Calu3 (cell line): ENCODE measurements at regions of chr10 and their contacts with region 1.

Region 1: DNA sequence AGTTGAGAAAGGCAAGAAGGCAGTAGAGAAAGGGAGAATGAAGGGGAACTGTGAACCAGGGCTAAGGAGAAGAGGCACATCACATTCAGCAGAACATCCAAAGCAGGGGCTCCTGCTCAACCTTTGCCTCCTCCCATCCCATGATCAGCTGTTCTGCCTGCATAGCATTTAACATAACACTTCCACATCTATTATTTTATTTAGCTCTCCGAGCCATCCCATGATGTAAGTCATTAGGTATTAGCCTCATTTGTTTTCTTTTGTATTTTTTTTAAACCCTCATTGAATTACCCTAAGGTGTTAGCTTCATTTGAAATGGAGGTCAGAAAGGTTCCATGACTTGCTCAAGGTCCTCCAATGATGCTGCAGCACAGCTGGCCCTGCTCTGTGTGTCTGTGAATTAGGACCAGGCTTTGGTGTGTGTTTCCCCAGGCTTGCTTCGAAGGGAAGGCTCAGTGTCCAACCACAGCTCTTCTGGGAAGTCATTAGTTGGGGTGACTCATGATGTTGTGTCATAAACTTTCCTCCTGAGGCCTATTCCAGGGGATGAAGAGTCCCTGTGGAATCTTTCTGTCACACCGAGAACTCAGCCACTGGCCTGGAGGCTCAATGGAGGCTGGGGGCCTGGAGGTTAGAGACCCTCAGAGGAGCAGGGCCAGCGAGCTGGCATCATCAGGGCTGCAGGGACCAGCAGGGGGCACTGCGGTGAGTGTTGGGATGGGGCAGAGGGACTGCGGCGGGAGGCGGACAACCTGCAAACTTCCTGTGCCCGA is 16.5 kb downstream of the NPFFR1 start:
- DNase-seq: peak; percentile 56
- H3K4me3 Mint-ChIP-seq: no peak overlapping the region
- H3K27ac Mint-ChIP-seq: peak overlapping the region; percentile 3
- H3K4me1 Mint-ChIP-seq: peaks cover 32% of the 10 kb centered on the region
- H3K27me3 Mint-ChIP-seq: no peaks in the 10 kb centered on the region
- CTCF ChIP-seq: peak; percentile 43

Region 2: DNA sequence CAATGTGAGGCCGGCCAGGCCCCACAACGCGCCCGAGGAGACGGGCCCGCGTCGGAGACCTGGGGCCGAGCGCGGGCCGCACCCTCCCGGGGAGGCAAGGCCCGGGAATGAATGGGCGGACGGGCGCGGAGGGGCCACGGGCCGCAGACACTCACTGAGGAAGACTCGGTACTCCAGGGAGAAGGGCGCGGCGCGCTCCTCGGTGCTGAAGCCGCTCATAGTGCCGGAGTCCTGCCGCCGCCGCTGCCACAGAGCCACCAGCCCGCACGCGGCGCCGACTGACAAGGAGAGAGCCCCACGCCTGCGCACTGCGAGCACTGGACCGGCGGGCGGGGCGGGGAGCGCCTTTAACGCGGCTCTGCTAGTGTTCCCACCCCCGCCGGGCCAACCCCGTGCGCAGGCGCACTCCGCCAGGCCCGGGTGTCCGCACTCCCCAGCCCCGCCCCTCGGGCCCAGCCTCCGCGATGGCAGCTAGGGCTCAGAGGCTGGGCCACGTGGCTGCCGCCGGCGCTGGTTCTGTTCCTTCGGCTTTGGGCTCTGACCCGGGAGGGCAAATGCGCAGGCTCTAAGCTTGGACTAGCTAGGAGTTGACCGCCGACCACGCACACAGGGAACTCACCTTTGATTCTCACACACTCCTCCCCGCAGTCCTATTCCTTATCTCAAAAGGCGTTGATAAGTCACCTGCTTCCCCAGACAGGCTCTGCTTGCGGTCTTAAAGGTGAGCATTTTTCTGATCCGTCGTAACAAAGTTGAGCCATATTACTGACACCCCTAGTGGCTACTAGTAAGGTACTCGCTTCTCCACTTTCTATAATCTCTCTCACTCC is 34.0 kb before region 1 on chr10 and contains the start of gene PPA1:
- CTCF ChIA-PET with region 1: interaction called, 13 read pairs
- intact Hi-C with region 1: loop called (anchors 5 kb)
- DNase-seq: peak; percentile 100
- H3K4me3 Mint-ChIP-seq: peak within 1 kb of the TSS; percentile 75
- H3K27ac Mint-ChIP-seq: peak within 1 kb of the TSS; percentile 97
- H3K4me1 Mint-ChIP-seq: peaks cover 7% of the 10 kb centered on the region
- H3K27me3 Mint-ChIP-seq: no peaks in the 10 kb centered on the region
- CTCF ChIP-seq: no peak
- total RNA-seq, gene PPA1: 260 and 280 TPM in 2 replicates

Region 3: DNA sequence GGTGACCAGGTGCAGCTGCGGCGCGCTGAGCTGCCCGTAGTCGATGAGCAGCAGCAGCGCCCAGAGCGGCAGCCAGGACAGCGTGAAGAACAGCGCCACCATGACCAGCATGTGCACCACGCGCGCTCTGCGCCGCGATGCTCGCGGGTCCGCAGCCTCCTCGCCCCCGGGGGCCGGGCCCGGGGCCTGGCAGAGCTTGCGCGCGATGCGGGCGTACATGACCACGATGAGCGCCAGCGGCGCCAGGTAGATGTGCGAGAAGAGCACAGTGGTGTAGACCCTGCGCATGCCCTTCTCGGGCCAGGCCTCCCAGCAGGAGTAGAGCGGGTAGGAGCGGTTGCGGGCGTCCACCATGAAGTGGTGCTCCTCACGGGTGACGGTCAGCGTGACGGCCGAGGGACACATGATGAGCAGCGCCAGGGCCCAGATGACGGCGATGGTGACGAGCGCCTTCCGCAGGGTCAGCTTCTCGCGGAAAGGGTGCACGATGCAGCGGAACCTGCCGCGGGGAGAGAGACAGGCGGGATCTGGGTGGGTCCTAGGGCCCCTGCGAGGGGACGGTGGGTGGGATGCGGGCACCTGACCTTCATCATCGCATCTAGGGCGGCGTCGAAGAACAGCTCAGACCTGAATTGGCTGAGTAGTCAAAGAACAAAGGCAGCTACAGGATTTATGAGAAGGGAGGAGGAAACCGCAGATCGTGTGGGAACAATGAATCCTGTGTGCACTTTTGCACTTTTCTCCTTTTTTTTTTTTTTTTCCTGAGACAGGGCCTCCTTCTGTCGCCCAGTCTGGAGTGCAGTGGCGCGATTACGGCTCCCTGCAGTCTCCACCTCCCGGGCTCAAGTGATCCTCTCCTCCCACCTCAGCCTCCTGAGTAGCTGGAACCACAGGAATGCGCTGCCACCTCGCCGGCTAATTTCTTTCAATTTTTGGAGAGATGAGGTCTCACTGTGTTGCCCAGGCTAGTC is 11.7 kb before region 1 on chr10:
- CTCF ChIA-PET with region 1: interaction called, 28 read pairs
- intact Hi-C with region 1: no loop called
- DNase-seq: peak; percentile 89
- H3K4me3 Mint-ChIP-seq: peak overlapping the region; percentile 36
- H3K27ac Mint-ChIP-seq: peak overlapping the region; percentile 60
- H3K4me1 Mint-ChIP-seq: peaks cover 54% of the 10 kb centered on the region
- H3K27me3 Mint-ChIP-seq: no peaks in the 10 kb centered on the region
- CTCF ChIP-seq: no peak